ENCODE measurements at regions of chr2 and their contacts with region 1.

Region 1: GRCh38 chr2:20097879-20098714 is 46.7 kb upstream of the LAPTM4A start:
- DNase-seq: peak; percentile 78 to 89
- H3K4me3 ChIP-seq: peak overlapping the region in 1 of 3 donors; percentile 19
- H3K27ac ChIP-seq: no peak overlapping the region
- H3K4me1 ChIP-seq: no peaks in the 10 kb centered on the region
- H3K27me3 ChIP-seq: no peaks in the 10 kb centered on the region
- CTCF ChIP-seq: peak; percentile 67 to 92 (median 84)
- POLR2A ChIP-seq: no peak

Region 2: GRCh38 chr2:20015472-20016083 is 82.5 kb before region 1 on chr2:
- intact Hi-C with region 1: loop called (anchors 10 kb)
- DNase-seq: no peak
- H3K4me3 ChIP-seq: no peak overlapping the region
- H3K27ac ChIP-seq: no peak overlapping the region
- H3K4me1 ChIP-seq: peaks cover 0 to 5% of the 10 kb centered on the region in 2 donors
- H3K27me3 ChIP-seq: no peaks in the 10 kb centered on the region
- CTCF ChIP-seq: peak; percentile 62 to 69 (median 64)
- POLR2A ChIP-seq: no peak